ENCODE measurements at regions of chr10 and their contacts with region 1.

Region 1: GRCh38 chr10:26437637-26438461 is at the start of gene APBB1IP:
- DNase-seq: peak in 9 of 10 donors; percentile 21 to 76 (median 40)
- ATAC-seq: peak; percentile 45 to 51
- H3K4me3 Mint-ChIP-seq: peak within 1 kb of the TSS; percentile 85 to 99 (median 98)
- H3K27ac Mint-ChIP-seq: peak within 1 kb of the TSS; percentile 90 to 99 (median 98)
- H3K4me1 Mint-ChIP-seq: peaks cover 31 to 57% (median 47%) of the 10 kb centered on the region in 4 donors
- H3K27me3 Mint-ChIP-seq: no peaks in the 10 kb centered on the region
- polyA plus RNA-seq, gene APBB1IP: 50.0 to 68.5 (median 65.1) TPM

Region 2: DNA sequence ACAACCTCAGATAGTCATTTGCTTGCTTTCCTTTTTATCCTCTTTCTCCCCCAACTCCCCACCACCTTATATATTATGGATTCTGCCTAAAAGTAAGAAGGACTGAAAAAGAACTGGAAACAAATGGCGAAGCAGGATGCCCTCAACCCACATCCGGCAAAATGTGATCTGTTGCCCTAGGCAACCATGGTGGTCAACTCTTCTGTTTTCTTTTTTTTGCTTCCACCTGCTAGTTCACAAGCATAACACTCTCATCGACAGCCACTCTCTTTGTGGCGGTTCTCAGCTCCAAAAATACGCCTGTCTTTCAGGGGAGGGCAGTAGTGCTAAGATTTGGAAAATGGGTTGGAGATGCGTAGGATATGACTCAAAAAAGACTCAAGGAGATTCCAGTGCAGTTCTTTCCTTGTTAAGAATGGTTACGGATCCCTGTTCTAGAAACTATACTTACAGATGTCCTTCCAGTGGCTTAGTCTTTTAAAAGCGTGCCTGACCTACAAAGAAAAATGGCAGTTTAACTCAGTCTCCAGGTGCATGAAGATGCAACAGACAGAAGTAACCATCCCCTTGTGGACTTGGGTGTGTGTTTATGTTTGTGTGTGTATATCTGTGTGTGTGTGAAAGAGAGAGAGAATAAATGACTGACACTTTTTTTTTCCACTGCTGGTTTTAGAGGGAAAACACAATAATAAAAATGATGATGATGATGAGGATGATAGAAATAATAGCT is 11.0 kb after region 1 on chr10:
- POLR2A ChIA-PET with region 1: interaction called, 40 read pairs
- DNase-seq: peak; percentile 30 to 94 (median 87)
- ATAC-seq: peak; percentile 78 to 88
- H3K4me3 Mint-ChIP-seq: peak overlapping the region; percentile 61 to 90 (median 85)
- H3K27ac Mint-ChIP-seq: peak overlapping the region; percentile 92 to 100 (median 97)
- H3K4me1 Mint-ChIP-seq: peaks cover 56 to 95% (median 89%) of the 10 kb centered on the region in 4 donors
- H3K27me3 Mint-ChIP-seq: peaks cover 0 to 3% (median 0%) of the 10 kb centered on the region in 5 donors

Region 3: DNA sequence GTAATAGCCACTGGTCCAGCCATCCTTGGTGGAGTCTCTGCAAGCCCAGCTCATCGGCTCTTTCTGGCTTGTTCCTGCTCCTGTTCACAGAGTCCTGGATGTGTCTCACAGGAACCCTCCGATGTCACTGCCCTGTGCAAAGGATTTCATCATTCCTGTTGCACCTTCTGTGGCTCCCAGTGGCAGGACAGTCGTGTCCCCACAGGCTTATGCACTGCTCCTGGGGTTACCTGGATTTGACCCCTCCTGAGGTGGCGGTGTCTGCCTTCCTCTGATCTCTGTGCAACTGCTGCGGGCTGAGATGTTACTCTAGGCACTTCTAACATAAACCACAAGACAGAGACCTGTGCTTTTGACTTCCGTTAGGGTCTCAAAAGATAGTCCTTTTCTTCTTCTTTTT is 30.9 kb after region 1 on chr10:
- POLR2A ChIA-PET with region 1: interaction called, 34 read pairs
- DNase-seq: peak; percentile 22 to 86 (median 72)
- ATAC-seq: peak; percentile 88 to 97
- H3K4me3 Mint-ChIP-seq: peak overlapping the region; percentile 64 to 86 (median 80)
- H3K27ac Mint-ChIP-seq: peak overlapping the region; percentile 70 to 98 (median 91)
- H3K4me1 Mint-ChIP-seq: peaks cover 41 to 97% (median 93%) of the 10 kb centered on the region in 4 donors
- H3K27me3 Mint-ChIP-seq: no peaks in the 10 kb centered on the region

Region 4: DNA sequence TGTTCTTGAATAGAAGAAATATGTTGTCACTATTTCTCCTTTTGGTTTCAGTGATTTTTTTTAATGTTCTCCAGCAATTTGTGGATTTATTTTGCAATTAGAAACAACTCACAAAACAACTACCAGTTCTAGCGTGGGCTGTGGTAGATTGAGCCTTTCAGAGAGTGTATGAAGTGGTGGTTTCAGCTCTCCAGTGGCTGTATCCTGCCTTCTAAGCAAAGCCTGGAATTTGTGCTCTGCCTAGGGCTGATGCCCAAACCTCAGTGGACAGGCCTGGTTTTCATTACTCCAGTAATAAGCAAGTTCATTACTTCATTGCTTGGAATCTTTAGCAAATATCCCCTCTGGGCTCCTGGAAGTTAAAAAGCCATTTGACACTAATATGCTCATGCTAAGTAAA is 36.2 kb after region 1 on chr10:
- POLR2A ChIA-PET with region 1: interaction called, 34 read pairs
- DNase-seq: no peak
- ATAC-seq: peak; percentile 38 to 39
- H3K4me3 Mint-ChIP-seq: peak overlapping the region; percentile 38 to 79 (median 68)
- H3K27ac Mint-ChIP-seq: peak overlapping the region; percentile 81 to 96 (median 94)
- H3K4me1 Mint-ChIP-seq: peaks cover 46 to 95% (median 88%) of the 10 kb centered on the region in 4 donors
- H3K27me3 Mint-ChIP-seq: no peaks in the 10 kb centered on the region

Region 5: DNA sequence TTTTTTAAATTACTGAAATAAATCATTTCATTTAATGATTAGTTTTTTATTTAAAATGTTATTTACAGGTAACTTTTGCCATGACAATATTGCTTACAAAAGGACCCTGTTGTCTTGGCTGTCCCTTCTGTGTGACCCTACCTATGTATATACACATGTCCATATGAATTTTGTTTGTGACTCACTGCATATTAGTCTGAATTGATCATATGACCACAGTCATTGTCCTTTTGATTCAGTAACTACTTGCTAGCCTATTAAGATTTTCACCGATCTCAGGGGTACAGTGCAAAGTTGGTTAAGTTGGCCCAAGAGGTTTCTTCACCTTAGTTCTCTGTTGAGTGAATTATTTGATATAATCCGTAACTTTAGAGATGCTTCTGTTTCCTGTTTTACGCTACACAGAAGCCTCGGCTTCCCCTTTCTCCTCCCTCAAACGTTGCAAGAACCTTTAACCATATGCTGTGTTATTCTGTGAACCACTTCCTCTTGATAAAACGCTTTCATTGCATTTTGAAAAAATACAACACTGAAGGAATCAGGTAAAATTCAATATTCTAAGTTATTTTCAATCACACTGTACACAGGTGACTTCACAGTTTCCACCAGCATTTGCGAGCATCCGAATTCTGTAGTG is 44.2 kb after region 1 on chr10:
- POLR2A ChIA-PET with region 1: interaction called, 17 read pairs
- DNase-seq: peak in 9 of 10 donors; percentile 37 to 88 (median 73)
- ATAC-seq: peak; percentile 72 to 85
- H3K4me3 Mint-ChIP-seq: peak overlapping the region; percentile 56 to 82 (median 73)
- H3K27ac Mint-ChIP-seq: peak overlapping the region; percentile 67 to 97 (median 94)
- H3K4me1 Mint-ChIP-seq: peaks cover 35 to 85% (median 75%) of the 10 kb centered on the region in 4 donors
- H3K27me3 Mint-ChIP-seq: no peaks in the 10 kb centered on the region

Measured in naive thymus-derived CD8-positive, alpha-beta T cell (primary cell).